Caco-2 (cell line): ENCODE measurements at regions of chr11 and their contacts with region 1.

Region 1: GRCh38 chr11:62427630-62428233 is 8.9 kb downstream of the SCGB1A1 start:
- DNase-seq: no peak
- H3K4me3 ChIP-seq: no peak overlapping the region
- H3K4me3 Mint-ChIP-seq: no peak overlapping the region
- H3K27ac Mint-ChIP-seq: peak overlapping the region; percentile 91
- H3K4me1 ChIP-seq: peaks cover 75% of the 10 kb centered on the region
- H3K4me1 Mint-ChIP-seq: peaks cover 46% of the 10 kb centered on the region
- H3K27me3 ChIP-seq: no peaks in the 10 kb centered on the region
- H3K27me3 Mint-ChIP-seq: no peaks in the 10 kb centered on the region
- CTCF ChIP-seq: no peak

Region 2: GRCh38 chr11:62445314-62445740 is 17.6 kb after region 1 on chr11:
- CTCF ChIA-PET with region 1: interaction called, 3 read pairs
- POLR2A ChIA-PET with region 1: no interaction called
- intact Hi-C with region 1: loop called (anchors 1 kb)
- DNase-seq: no peak
- H3K4me3 ChIP-seq: no peak overlapping the region
- H3K4me3 Mint-ChIP-seq: no peak overlapping the region
- H3K27ac Mint-ChIP-seq: no peak overlapping the region
- H3K4me1 ChIP-seq: peaks cover 20% of the 10 kb centered on the region
- H3K4me1 Mint-ChIP-seq: peaks cover 7% of the 10 kb centered on the region
- H3K27me3 ChIP-seq: no peaks in the 10 kb centered on the region
- H3K27me3 Mint-ChIP-seq: no peaks in the 10 kb centered on the region
- CTCF ChIP-seq: no peak

Region 3: GRCh38 chr11:62479631-62480201 is 52.0 kb after region 1 on chr11:
- CTCF ChIA-PET with region 1: interaction called, 15 read pairs
- POLR2A ChIA-PET with region 1: interaction called, 6 read pairs
- intact Hi-C with region 1: loop called (anchors 1 kb)
- DNase-seq: no peak
- H3K4me3 ChIP-seq: no peak overlapping the region
- H3K4me3 Mint-ChIP-seq: peak overlapping the region; percentile 43
- H3K27ac Mint-ChIP-seq: peak overlapping the region; percentile 92
- H3K4me1 ChIP-seq: peaks cover 62% of the 10 kb centered on the region
- H3K4me1 Mint-ChIP-seq: peaks cover 40% of the 10 kb centered on the region
- H3K27me3 ChIP-seq: no peaks in the 10 kb centered on the region
- H3K27me3 Mint-ChIP-seq: no peaks in the 10 kb centered on the region
- CTCF ChIP-seq: no peak

Region 4: GRCh38 chr11:62508268-62509058 is 80.7 kb after region 1 on chr11:
- CTCF ChIA-PET with region 1: interaction called, 11 read pairs
- POLR2A ChIA-PET with region 1: no interaction called
- intact Hi-C with region 1: loop called (anchors 2 kb)
- DNase-seq: peak; percentile 79 to 83
- H3K4me3 ChIP-seq: 0 out of 2 replicates have a peak overlapping the region, but pooled peaks have one; percentile 5
- H3K4me3 Mint-ChIP-seq: peak overlapping the region; percentile 58
- H3K27ac Mint-ChIP-seq: peak overlapping the region; percentile 85
- H3K4me1 ChIP-seq: peaks cover 56% of the 10 kb centered on the region
- H3K4me1 Mint-ChIP-seq: peaks cover 36% of the 10 kb centered on the region
- H3K27me3 ChIP-seq: no peaks in the 10 kb centered on the region
- H3K27me3 Mint-ChIP-seq: no peaks in the 10 kb centered on the region
- CTCF ChIP-seq: peak; percentile 41 to 74

Region 5: GRCh38 chr11:62573592-62574362 is 146.0 kb after region 1 on chr11 and contains the start of gene EEF1G:
- CTCF ChIA-PET with region 1: interaction called, 10 read pairs
- POLR2A ChIA-PET with region 1: interaction called, 3 read pairs
- intact Hi-C with region 1: no loop called
- DNase-seq: peak; percentile 100
- H3K4me3 ChIP-seq: peak within 1 kb of the TSS; percentile 62
- H3K4me3 Mint-ChIP-seq: peak within 1 kb of the TSS; percentile 97
- H3K27ac Mint-ChIP-seq: peak within 1 kb of the TSS; percentile 100
- H3K4me1 ChIP-seq: peaks cover 25% of the 10 kb centered on the region
- H3K4me1 Mint-ChIP-seq: peaks cover 56% of the 10 kb centered on the region
- H3K27me3 ChIP-seq: no peaks in the 10 kb centered on the region
- H3K27me3 Mint-ChIP-seq: no peaks in the 10 kb centered on the region
- CTCF ChIP-seq: no peak
- total RNA-seq, gene EEF1G: 2,004 and 2,035 TPM in 2 replicates